CD8-positive, alpha-beta T cell (primary cell): ENCODE measurements at regions of chr11 and their contacts with region 1.

Region 1: GRCh38 chr11:128884703-128885338 is 6.3 kb upstream of the KCNJ5 start:
- DNase-seq: peak in 7 of 9 experiments; percentile 35 to 78 (median 57)
- ATAC-seq: peak; percentile 55
- H3K4me3 ChIP-seq: no peak overlapping the region
- H3K4me3 Mint-ChIP-seq: no peak overlapping the region
- H3K27ac ChIP-seq: no peak overlapping the region
- H3K27ac Mint-ChIP-seq: no peak overlapping the region
- H3K4me1 ChIP-seq: no peaks in the 10 kb centered on the region
- H3K4me1 Mint-ChIP-seq: peaks cover 1% of the 10 kb centered on the region
- H3K27me3 ChIP-seq: peaks cover 6 to 10% of the 10 kb centered on the region in 2 experiments
- H3K27me3 Mint-ChIP-seq: peaks cover 67% of the 10 kb centered on the region
- CTCF ChIP-seq: peak; percentile 93

Region 2: GRCh38 chr11:128905345-128906184 is 20.7 kb after region 1 on chr11:
- CTCF ChIA-PET with region 1: interaction called, 91 read pairs
- POLR2A ChIA-PET with region 1: no interaction called
- intact Hi-C with region 1: loop called in 1 of 2 experiments (anchors 1 kb)
- DNase-seq: peak in 6 of 9 experiments; percentile 13 to 67 (median 51)
- ATAC-seq: peak; percentile 77
- H3K4me3 ChIP-seq: peak overlapping the region; percentile 59 to 60
- H3K4me3 Mint-ChIP-seq: peak overlapping the region; percentile 79
- H3K27ac ChIP-seq: no peak overlapping the region
- H3K27ac Mint-ChIP-seq: no peak overlapping the region
- H3K4me1 ChIP-seq: peaks cover 7% of the 10 kb centered on the region
- H3K4me1 Mint-ChIP-seq: peaks cover 21% of the 10 kb centered on the region
- H3K27me3 ChIP-seq: peaks cover 0 to 2% of the 10 kb centered on the region in 2 experiments
- H3K27me3 Mint-ChIP-seq: peaks cover 40% of the 10 kb centered on the region
- CTCF ChIP-seq: peak; percentile 46

Region 3: DNA sequence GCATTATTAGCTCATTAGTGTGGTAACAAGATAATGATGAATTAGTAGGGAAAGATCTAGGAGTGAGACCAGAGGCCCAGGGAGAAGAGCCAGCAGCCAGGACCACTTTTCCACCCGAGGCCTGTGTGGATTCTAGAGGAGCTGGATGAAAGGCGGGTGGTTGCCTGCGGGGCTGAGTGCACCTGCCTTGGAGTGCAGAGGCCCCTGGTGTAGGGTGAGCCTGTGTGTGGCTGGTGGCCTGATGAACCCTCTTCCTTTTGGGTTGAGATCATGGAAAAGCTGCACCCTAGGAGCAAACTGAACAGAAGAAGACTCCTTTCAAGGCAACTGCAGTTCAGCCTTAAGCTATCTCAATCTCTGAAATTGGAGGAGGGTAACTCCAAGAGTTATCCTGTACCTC is 63.8 kb after region 1 on chr11:
- CTCF ChIA-PET with region 1: interaction called, 222 read pairs
- POLR2A ChIA-PET with region 1: no interaction called
- intact Hi-C with region 1: no loop called
- DNase-seq: no peak
- ATAC-seq: no peak
- H3K4me3 ChIP-seq: no peak overlapping the region
- H3K4me3 Mint-ChIP-seq: no peak overlapping the region
- H3K27ac ChIP-seq: no peak overlapping the region
- H3K27ac Mint-ChIP-seq: no peak overlapping the region
- H3K4me1 ChIP-seq: no peaks in the 10 kb centered on the region
- H3K4me1 Mint-ChIP-seq: no peaks in the 10 kb centered on the region
- H3K27me3 ChIP-seq: peaks cover 0 to 2% of the 10 kb centered on the region in 2 experiments
- H3K27me3 Mint-ChIP-seq: peaks cover 3% of the 10 kb centered on the region
- CTCF ChIP-seq: no peak

Region 4: GRCh38 chr11:129117595-129118350 is 233.0 kb after region 1 on chr11:
- CTCF ChIA-PET with region 1: interaction called, 3 read pairs
- POLR2A ChIA-PET with region 1: no interaction called
- intact Hi-C with region 1: loop called in 1 of 2 experiments (anchors 10 kb)
- DNase-seq: peak in 8 of 9 experiments; percentile 13 to 72 (median 43)
- ATAC-seq: peak; percentile 40
- H3K4me3 ChIP-seq: no peak overlapping the region
- H3K4me3 Mint-ChIP-seq: no peak overlapping the region
- H3K27ac ChIP-seq: no peak overlapping the region
- H3K27ac Mint-ChIP-seq: no peak overlapping the region
- H3K4me1 ChIP-seq: no peaks in the 10 kb centered on the region
- H3K4me1 Mint-ChIP-seq: peaks cover 2% of the 10 kb centered on the region
- H3K27me3 ChIP-seq: no peaks in the 10 kb centered on the region
- H3K27me3 Mint-ChIP-seq: no peaks in the 10 kb centered on the region
- CTCF ChIP-seq: peak; percentile 95